ENCODE measurements at regions of chr12 and their contacts with region 1.

Region 1: DNA sequence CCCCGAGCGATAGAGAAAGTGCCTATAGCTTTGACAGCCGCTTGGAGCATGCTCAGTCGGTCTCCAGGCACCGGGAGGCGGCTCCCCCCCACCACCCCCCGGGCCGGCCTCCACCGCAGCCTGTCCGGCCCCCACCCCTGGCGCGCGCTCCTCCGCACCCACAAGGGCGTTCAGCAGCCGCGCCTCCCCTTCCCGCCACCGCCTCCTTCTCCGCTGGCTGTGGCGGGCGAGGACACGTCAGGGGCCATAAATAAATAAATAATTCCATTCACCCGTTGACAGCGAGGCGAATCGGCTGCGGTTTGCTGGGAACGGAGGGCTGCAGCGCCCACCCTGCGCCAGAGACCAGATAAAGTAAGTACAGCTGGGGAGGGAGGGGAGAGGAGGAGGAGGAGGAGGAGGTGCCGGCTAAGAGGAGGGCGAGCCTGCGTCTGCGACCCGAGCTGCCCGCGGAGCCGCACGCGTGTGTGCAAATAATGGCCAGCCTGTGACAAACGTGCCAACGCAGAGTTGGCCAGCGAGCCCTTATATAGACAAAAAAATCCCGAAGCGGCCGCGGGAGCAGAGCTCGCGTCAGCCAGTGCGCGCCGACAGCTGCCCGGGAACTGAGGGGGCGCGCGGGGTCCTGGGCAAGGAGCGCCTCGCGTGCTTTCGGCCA is at the start of gene SLC16A7:
- DNase-seq: peak; percentile 86
- ATAC-seq: peak; percentile 82
- H3K4me3 ChIP-seq: peak within 1 kb of the TSS; percentile 87
- H3K27ac ChIP-seq: peak within 1 kb of the TSS; percentile 97
- H3K4me1 ChIP-seq: no peaks in the 10 kb centered on the region
- H3K27me3 ChIP-seq: no peaks in the 10 kb centered on the region
- CTCF ChIP-seq: no peak; the same call in 1 of the 2 replicates
- POLR2A ChIP-seq: peak; percentile 52
- RAD21 ChIP-seq: no peak
- total RNA-seq, gene SLC16A7: 21.5 and 30.0 TPM in 2 replicates

Region 2: GRCh38 chr12:59408431-59408830 is 187.6 kb before region 1 on chr12:
- CTCF ChIA-PET with region 1: no interaction called
- POLR2A ChIA-PET with region 1: no interaction called
- dilution Hi-C with region 1: no loop called
- in situ Hi-C with region 1: no loop called
- intact Hi-C with region 1: loop called (anchors 5 kb)
- DNase-seq: peak; percentile 26
- ATAC-seq: no peak
- H3K4me3 ChIP-seq: no peak overlapping the region
- H3K27ac ChIP-seq: no peak overlapping the region
- H3K4me1 ChIP-seq: no peaks in the 10 kb centered on the region
- H3K27me3 ChIP-seq: no peaks in the 10 kb centered on the region
- CTCF ChIP-seq: no peak
- POLR2A ChIP-seq: no peak
- RAD21 ChIP-seq: no peak

Region 3: GRCh38 chr12:59699421-59700152 is 103.6 kb after region 1 on chr12:
- CTCF ChIA-PET with region 1: no interaction called
- POLR2A ChIA-PET with region 1: no interaction called
- dilution Hi-C with region 1: no loop called
- in situ Hi-C with region 1: no loop called
- intact Hi-C with region 1: loop called (anchors 2 kb)
- DNase-seq: peak; percentile 86
- ATAC-seq: peak; percentile 83
- H3K4me3 ChIP-seq: no peak overlapping the region
- H3K27ac ChIP-seq: peak overlapping the region; percentile 48; the same call in 1 of the 2 replicates
- H3K4me1 ChIP-seq: peaks cover 2% of the 10 kb centered on the region; the same call in 1 of the 2 replicates
- H3K27me3 ChIP-seq: no peaks in the 10 kb centered on the region
- CTCF ChIP-seq: no peak
- POLR2A ChIP-seq: no peak
- RAD21 ChIP-seq: no peak

Region 4: GRCh38 chr12:59808317-59808910 is 212.4 kb after region 1 on chr12:
- CTCF ChIA-PET with region 1: no interaction called
- POLR2A ChIA-PET with region 1: interaction called, 3 read pairs
- dilution Hi-C with region 1: no loop called
- in situ Hi-C with region 1: no loop called
- intact Hi-C with region 1: loop called (anchors 1 kb)
- DNase-seq: peak; percentile 41
- ATAC-seq: peak; percentile 84
- H3K4me3 ChIP-seq: no peak overlapping the region
- H3K27ac ChIP-seq: no peak overlapping the region
- H3K4me1 ChIP-seq: no peaks in the 10 kb centered on the region; the same call in 1 of the 2 replicates
- H3K27me3 ChIP-seq: no peaks in the 10 kb centered on the region
- CTCF ChIP-seq: peak; percentile 64
- POLR2A ChIP-seq: no peak
- RAD21 ChIP-seq: peak; percentile 59

Region 5: DNA sequence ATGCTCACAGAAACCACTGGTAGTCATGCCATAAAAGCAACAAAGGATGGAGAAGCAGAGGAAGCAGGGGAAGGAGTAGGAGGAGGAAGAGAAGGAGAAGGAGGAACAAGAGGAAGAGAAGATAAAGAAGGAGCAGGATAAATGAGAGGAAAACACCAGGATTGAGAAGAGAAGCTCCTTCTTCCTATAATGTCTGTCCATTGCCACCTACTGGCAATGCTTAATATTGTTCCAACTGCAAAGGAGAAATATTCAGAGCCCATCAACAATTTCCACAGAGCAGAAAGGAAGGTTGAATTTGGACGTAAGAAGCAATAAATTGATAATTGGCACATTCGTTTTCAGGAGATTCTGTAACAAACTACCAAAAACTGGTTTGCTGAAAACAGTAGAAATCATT is 898.2 kb after region 1 on chr12:
- CTCF ChIA-PET with region 1: no interaction called
- POLR2A ChIA-PET with region 1: no interaction called
- dilution Hi-C with region 1: no loop called
- in situ Hi-C with region 1: no loop called
- intact Hi-C with region 1: loop called (anchors 2 kb)
- DNase-seq: peak; percentile 63
- ATAC-seq: peak; percentile 81
- H3K4me3 ChIP-seq: no peak overlapping the region
- H3K27ac ChIP-seq: no peak overlapping the region
- H3K4me1 ChIP-seq: no peaks in the 10 kb centered on the region
- H3K27me3 ChIP-seq: no peaks in the 10 kb centered on the region
- CTCF ChIP-seq: peak; percentile 86
- POLR2A ChIP-seq: no peak
- RAD21 ChIP-seq: peak; percentile 86

Measured in IMR-90 (cell line).